HEK293T (cell line): ENCODE measurements at regions of chr16 and their contacts with region 1.

Region 1: DNA sequence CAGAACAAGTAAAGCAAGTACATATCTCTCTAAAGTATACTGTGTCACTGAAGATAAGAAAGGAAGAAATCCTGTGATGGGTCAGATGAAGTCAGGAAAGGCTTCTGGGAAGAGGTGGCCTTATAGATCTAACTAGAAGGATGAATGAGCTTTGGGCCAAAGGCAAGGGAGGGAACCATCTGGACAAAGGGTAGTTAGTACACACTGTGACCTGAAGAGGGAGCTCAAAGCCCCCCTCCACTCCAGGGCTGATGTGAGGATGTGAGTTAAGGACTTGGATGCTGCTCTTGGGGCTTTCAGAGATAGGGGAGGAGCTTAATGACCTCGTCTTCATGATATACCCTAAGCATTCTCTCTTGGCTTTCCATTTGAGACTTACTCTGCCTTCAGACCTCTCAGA is 185.3 kb upstream of the CACNG3 start:
- DNase-seq: peak; percentile 72

Region 2: DNA sequence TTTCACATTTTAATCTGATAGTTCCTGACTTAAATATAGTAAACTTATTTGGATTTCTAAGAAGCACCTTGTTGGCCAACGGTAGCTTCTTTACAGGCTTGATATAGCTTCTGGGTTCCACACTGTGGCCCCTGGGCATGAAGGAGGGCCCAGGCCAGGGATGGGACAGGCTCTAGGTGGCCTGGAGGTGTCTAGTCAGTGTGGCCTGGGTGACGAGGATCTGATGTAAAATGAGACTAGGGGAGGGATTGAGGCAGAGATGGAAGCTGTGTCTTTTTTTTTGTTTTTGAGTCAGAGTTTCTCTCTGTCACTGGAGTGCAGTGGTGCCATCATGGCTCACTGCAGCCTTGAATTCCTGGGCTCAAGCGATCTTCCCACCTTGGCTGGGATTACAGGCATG is 48.1 kb before region 1 on chr16:
- CTCF ChIA-PET with region 1: no interaction called
- POLR2A ChIA-PET with region 1: no interaction called
- DNase-seq: no peak

Region 3: DNA sequence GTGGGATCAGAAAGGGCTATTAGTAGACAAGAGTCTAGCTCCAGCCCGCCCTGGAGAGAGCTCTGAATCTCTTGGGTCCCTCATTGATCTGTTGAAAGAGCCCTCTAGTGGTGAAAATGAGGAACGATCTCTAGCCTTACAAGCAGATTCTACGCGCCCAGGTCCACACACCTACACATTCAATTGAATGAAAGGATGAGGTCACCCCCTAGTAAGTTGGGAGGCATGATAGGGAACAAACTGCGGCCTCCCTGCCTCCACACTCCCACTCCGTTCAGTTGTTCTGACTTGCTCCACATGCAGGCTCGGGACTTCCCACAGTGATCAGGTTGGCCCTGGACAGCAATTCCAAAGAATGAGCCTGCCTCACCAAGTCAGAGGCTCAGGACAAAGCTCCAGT is 182.3 kb after region 1 on chr16:
- CTCF ChIA-PET with region 1: interaction called, 14 read pairs
- POLR2A ChIA-PET with region 1: no interaction called
- DNase-seq: peak; percentile 59

Region 4: GRCh38 chr16:24504472-24505345 is 433.9 kb after region 1 on chr16:
- CTCF ChIA-PET with region 1: interaction called, 13 read pairs
- POLR2A ChIA-PET with region 1: no interaction called
- DNase-seq: peak; percentile 76

Region 5: GRCh38 chr16:24516900-24517669 is 446.2 kb after region 1 on chr16:
- CTCF ChIA-PET with region 1: no interaction called
- POLR2A ChIA-PET with region 1: no interaction called
- DNase-seq: peak; percentile 77